CD8-positive, alpha-beta T cell (primary cell): ENCODE measurements at regions of chr17 and their contacts with region 1.

Region 1: GRCh38 chr17:28552246-28552999 is at the start of gene UNC119:
- DNase-seq: peak; percentile 48 to 88 (median 76)
- ATAC-seq: peak; percentile 80
- H3K4me3 ChIP-seq: peak within 1 kb of the TSS; percentile 47 to 48
- H3K4me3 Mint-ChIP-seq: peak within 1 kb of the TSS; percentile 90
- H3K27ac ChIP-seq: peak within 1 kb of the TSS in 1 of 2 experiments; percentile 10
- H3K27ac Mint-ChIP-seq: peak within 1 kb of the TSS; percentile 86
- H3K4me1 ChIP-seq: peaks cover 53% of the 10 kb centered on the region
- H3K4me1 Mint-ChIP-seq: peaks cover 50% of the 10 kb centered on the region
- H3K27me3 ChIP-seq: no peaks in the 10 kb centered on the region
- H3K27me3 Mint-ChIP-seq: no peaks in the 10 kb centered on the region
- CTCF ChIP-seq: no peak
- total RNA-seq, gene UNC119: 48.9 to 49.9 TPM

Region 2: GRCh38 chr17:28494445-28495188 is 57.8 kb before region 1 on chr17:
- CTCF ChIA-PET with region 1: interaction called, 7 read pairs
- POLR2A ChIA-PET with region 1: no interaction called
- intact Hi-C with region 1: loop called in 1 of 2 experiments (anchors 2 kb)
- DNase-seq: peak; percentile 60 to 88 (median 79)
- ATAC-seq: peak; percentile 91
- H3K4me3 ChIP-seq: no peak overlapping the region
- H3K4me3 Mint-ChIP-seq: no peak overlapping the region
- H3K27ac ChIP-seq: no peak overlapping the region
- H3K27ac Mint-ChIP-seq: no peak overlapping the region
- H3K4me1 ChIP-seq: no peaks in the 10 kb centered on the region
- H3K4me1 Mint-ChIP-seq: no peaks in the 10 kb centered on the region
- H3K27me3 ChIP-seq: no peaks in the 10 kb centered on the region
- H3K27me3 Mint-ChIP-seq: peaks cover 4% of the 10 kb centered on the region
- CTCF ChIP-seq: peak; percentile 71

Region 3: GRCh38 chr17:28540231-28540630 is 12.2 kb before region 1 on chr17:
- CTCF ChIA-PET with region 1: interaction called, 23 read pairs
- POLR2A ChIA-PET with region 1: no interaction called
- intact Hi-C with region 1: no loop called
- DNase-seq: no peak
- ATAC-seq: no peak
- H3K4me3 ChIP-seq: no peak overlapping the region
- H3K4me3 Mint-ChIP-seq: no peak overlapping the region
- H3K27ac ChIP-seq: no peak overlapping the region
- H3K27ac Mint-ChIP-seq: no peak overlapping the region
- H3K4me1 ChIP-seq: no peaks in the 10 kb centered on the region
- H3K4me1 Mint-ChIP-seq: no peaks in the 10 kb centered on the region
- H3K27me3 ChIP-seq: no peaks in the 10 kb centered on the region
- H3K27me3 Mint-ChIP-seq: no peaks in the 10 kb centered on the region
- CTCF ChIP-seq: no peak

Region 4: DNA sequence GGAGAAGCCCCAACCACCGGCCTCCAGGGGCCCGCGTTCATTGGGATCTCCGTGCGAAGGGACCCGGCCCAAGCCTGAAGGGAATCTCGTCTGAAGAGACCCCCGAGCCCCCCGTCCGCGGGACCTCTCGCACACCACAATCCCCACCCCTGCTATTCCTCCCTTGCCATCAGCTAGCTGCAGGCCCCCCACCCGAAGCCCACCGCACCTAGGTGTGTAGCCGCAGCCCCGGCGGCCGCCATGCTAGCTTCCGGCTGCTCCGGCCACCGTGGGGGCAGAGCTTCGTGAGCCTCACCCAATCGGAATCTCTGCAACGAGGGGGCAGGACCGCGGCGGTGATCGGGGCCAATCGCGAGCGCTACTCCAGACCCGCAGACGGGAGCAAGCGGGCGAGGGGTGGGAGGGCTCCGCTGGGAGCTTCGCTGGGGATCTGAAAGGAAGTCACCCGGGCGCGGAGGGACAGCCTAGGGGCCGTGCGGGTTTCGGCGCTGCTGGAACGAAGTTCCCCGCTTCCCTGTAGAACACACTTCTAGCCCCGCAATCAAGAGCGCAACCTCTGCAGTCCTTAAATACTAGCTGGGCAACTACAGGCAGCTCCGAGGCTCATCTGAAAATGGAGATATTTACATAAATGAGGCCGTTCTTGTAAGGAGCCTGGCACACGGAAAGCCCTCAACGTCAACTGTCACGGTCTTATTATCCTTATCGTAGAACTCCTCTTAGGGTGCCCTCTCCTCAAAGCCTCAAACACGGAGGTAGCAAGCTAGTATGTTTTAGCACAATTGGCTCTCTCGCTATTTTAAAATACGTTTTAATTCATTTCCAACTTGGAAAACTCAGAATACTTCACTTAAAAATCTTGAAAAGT is 19.1 kb after region 1 on chr17 and contains the start of gene PIGS:
- CTCF ChIA-PET with region 1: interaction called, 19 read pairs
- POLR2A ChIA-PET with region 1: interaction called, 8 read pairs
- intact Hi-C with region 1: loop called (anchors 1 kb)
- DNase-seq: peak; percentile 74 to 94 (median 90)
- ATAC-seq: peak; percentile 95
- H3K4me3 ChIP-seq: peak within 1 kb of the TSS; percentile 98 to 100
- H3K4me3 Mint-ChIP-seq: peak within 1 kb of the TSS; percentile 97
- H3K27ac ChIP-seq: peak within 1 kb of the TSS; percentile 69 to 92
- H3K27ac Mint-ChIP-seq: peak within 1 kb of the TSS; percentile 96
- H3K4me1 ChIP-seq: peaks cover 45% of the 10 kb centered on the region
- H3K4me1 Mint-ChIP-seq: peaks cover 69% of the 10 kb centered on the region
- H3K27me3 ChIP-seq: no peaks in the 10 kb centered on the region
- H3K27me3 Mint-ChIP-seq: no peaks in the 10 kb centered on the region
- CTCF ChIP-seq: no peak
- total RNA-seq, gene PIGS: 46.2 to 60.0 TPM

Region 5: DNA sequence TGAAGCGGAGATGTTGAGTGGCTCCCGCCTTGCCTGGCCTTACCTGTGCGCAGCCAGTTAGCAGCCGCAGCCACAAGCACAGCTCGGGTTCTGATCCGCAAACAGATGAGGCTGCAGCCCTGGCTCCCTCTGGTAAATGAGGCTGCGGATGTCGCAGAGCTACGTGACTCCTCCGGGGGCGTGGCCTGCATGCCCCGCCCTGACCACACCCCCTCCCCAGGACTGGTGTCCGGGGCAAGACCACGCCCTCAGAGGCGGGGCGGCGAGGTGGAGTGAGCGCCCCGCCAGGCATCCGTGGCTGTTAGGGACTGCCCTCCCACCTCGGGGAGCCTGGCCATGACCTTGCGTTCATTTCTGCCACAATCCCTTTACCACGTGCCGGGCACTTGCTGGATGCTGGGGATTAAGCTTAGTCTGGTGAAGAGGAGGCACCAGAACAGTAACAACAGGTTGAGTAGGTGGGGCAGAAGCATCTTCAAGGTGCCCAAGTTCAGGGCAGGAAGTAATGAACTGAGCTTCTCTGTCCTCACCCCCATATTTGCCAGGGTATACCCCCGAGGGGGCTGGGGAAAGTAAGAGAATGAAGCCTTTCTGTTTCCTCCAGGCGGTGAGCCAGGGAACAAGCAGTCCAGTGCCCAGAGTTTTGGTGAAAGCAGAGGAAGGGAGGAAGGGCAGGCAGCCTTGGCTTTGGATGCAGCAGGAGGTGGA is 24.5 kb after region 1 on chr17 and contains the start of gene ALDOC:
- CTCF ChIA-PET with region 1: interaction called, 19 read pairs
- POLR2A ChIA-PET with region 1: interaction called, 8 read pairs
- intact Hi-C with region 1: loop called (anchors 1 kb)
- DNase-seq: peak; percentile 95 to 99 (median 99)
- ATAC-seq: peak; percentile 99
- H3K4me3 ChIP-seq: peak within 1 kb of the TSS; percentile 36 to 40
- H3K4me3 Mint-ChIP-seq: peak within 1 kb of the TSS; percentile 81
- H3K27ac ChIP-seq: peak within 1 kb of the TSS; percentile 17 to 62
- H3K27ac Mint-ChIP-seq: peak within 1 kb of the TSS; percentile 92
- H3K4me1 ChIP-seq: peaks cover 28% of the 10 kb centered on the region
- H3K4me1 Mint-ChIP-seq: peaks cover 42% of the 10 kb centered on the region
- H3K27me3 ChIP-seq: no peaks in the 10 kb centered on the region
- H3K27me3 Mint-ChIP-seq: no peaks in the 10 kb centered on the region
- CTCF ChIP-seq: no peak
- total RNA-seq, gene ALDOC: 16.3 to 16.5 TPM

Region 6: GRCh38 chr17:28612936-28613872 is 60.8 kb after region 1 on chr17:
- CTCF ChIA-PET with region 1: interaction called, 42 read pairs
- POLR2A ChIA-PET with region 1: no interaction called
- intact Hi-C with region 1: loop called (anchors 5 kb)
- DNase-seq: peak in 8 of 9 experiments; percentile 7 to 62 (median 44)
- ATAC-seq: peak; percentile 57
- H3K4me3 ChIP-seq: no peak overlapping the region
- H3K4me3 Mint-ChIP-seq: no peak overlapping the region
- H3K27ac ChIP-seq: no peak overlapping the region
- H3K27ac Mint-ChIP-seq: no peak overlapping the region
- H3K4me1 ChIP-seq: no peaks in the 10 kb centered on the region
- H3K4me1 Mint-ChIP-seq: peaks cover 3% of the 10 kb centered on the region
- H3K27me3 ChIP-seq: no peaks in the 10 kb centered on the region
- H3K27me3 Mint-ChIP-seq: no peaks in the 10 kb centered on the region
- CTCF ChIP-seq: peak; percentile 74

Region 7: DNA sequence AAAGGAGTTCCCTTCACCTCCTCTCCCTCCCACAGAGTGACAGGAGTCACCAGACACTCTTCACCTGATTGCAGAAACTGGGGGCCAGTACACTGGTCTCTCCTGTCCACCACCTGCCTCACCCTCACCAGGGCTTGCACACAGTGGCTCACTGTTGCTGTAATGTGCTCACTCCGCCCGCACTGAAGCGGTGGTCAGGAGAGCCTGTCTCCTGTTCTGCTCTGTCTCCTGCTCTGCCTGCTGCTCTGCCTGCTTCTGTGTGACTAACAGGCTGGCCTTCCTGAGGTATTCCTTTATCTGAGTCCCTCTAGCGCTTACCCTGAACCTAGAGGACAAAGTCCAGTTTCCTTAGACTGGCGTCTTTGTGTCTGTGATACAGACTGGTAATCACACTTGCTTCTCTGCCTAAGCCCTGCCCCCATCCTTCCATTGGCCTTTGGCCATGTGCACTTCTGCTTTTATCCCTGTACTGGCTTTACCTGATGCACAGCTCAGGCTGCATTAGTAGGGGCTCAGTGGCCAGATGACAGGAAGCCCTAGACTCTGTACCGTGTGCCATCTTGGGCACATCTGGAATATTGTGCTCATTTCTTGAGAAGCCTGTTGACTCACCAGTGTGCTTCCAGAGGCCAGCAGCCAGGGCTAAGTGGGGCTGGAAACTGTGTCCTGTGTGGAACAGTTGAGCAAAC is 146.0 kb after region 1 on chr17:
- CTCF ChIA-PET with region 1: no interaction called
- POLR2A ChIA-PET with region 1: no interaction called
- intact Hi-C with region 1: no loop called
- DNase-seq: no peak
- ATAC-seq: no peak
- H3K4me3 ChIP-seq: no peak overlapping the region
- H3K4me3 Mint-ChIP-seq: no peak overlapping the region
- H3K27ac ChIP-seq: no peak overlapping the region
- H3K27ac Mint-ChIP-seq: no peak overlapping the region
- H3K4me1 ChIP-seq: no peaks in the 10 kb centered on the region
- H3K4me1 Mint-ChIP-seq: no peaks in the 10 kb centered on the region
- H3K27me3 ChIP-seq: no peaks in the 10 kb centered on the region
- H3K27me3 Mint-ChIP-seq: no peaks in the 10 kb centered on the region
- CTCF ChIP-seq: no peak